Posterior vena cava (tissue), 2 donors: ENCODE measurements at regions of chr16 and their contacts with region 1.

Region 1: DNA sequence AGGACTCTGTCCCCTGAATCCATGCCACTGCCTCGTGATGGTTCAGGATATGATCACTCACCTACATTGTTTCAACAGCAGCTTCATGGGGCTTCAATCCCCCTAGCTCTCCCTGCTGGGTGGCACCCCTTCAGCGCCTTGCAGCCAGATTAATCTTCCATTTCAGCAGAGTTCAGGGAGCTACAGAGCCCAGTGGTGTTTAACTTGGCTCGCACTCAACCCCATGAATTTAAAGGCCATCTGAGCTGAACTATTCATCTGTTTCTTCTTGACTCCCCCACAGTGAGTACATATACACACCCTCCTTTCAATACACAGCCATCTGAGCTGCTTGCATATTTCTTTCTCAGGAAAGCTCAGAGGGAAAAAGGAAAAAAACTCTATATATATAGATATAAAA is 202.8 kb upstream of the C16orf82 start:
- DNase-seq: no peak

Region 2: DNA sequence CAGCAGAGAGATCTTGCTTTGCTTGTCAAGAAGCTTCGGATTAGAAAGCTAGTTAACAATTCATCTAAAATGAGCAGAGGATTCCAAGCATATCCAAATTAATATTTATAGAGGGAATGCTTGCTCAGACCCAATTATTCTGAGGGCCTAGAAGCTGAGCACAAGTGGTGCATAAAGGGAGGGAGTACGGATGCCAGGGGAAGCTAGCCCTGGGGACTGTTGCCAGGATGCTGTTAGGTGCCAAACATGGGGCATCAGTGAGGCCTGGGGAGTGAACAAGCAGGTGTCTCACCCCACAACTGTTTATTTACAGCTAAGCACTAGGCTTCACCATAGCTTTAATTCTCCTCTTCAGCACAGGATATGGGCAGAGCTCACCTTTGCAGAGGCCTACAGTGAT is 481.3 kb before region 1 on chr16:
- intact Hi-C with region 1: loop called in 1 of 2 experiments (anchors 2 kb)
- DNase-seq: no peak